ENCODE measurements at regions of chr20 and their contacts with region 1.

Region 1: DNA sequence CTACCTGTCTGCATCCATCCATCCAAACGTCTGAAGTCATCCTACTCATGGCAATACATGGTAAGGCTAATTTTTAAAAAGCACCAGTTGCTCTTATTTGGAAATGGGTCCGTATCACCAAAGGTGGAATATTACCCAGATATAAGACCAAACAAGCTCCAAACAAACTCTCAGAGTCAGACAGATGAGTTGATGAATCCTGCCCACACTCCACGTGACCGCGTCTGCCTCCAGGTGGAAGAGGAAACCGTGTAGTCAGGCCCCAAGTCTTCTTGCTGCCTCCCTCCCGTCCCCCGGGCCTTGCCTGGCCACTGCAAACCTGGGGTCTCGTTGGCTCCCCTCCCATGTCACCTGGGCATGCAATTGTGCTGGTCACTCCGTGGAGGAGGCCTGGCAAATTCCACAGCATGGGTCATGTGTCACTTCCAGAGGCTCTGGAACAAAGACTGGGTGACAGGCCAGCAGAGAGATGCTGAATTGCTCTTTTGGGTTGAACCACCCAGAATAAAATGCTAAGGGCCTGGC is 31.8 kb downstream of the CTCFL start:
- DNase-seq: no peak
- ATAC-seq: no peak

Region 2: DNA sequence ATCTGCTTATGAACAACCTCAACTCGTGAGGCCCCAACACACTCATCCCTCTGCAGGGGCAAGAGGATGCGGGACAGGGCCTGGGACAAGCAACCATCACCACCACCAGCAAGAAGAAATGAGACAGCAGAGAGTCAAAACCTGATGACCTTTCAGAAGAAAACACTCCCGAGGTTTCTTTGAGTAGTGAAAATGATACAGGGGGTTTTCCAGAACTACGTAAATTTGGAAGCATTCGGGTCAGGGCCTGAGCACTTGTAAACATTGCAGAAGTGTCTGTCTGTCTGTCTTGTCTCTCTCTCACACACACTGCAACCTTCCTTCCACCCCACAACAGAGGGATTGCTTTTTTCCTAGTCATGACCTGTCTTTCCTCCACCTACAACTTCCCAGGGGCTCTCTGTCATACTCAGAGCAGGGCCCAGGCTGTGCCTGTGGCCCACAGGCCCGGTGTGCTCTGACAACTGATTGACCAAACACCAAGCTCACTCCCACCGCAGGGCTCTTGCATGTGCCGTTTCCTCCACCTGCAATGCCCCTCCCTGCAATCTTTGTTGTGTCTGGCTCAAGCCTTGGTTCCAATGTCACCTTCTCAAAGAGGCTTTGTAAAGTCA is 317.6 kb before region 1 on chr20:
- intact Hi-C with region 1: no loop called
- DNase-seq: no peak
- ATAC-seq: no peak

Region 3: DNA sequence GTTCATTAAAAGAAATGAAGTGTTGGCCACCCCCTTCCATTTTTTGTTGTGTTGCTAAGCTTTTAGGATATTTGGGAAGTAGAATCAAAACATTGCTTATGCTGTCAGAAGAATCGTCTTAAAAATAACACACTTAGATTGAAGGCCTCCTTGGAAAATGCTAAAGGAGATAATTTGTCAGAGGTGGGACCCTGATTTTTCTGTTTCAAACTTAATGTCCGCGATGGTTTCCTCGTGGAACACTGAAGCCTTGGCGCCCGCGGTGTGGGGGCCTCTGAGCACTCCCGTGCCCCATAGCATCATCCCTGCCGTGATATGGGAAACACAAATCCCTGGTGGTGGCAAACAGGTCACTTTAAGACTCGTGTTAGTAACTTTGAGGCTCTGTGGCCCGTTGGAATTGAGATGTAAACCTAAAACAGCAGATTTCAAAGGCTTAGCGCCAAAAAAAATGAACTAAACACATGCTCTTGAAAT is 111.1 kb before region 1 on chr20:
- intact Hi-C with region 1: loop called (anchors 1 kb)
- DNase-seq: no peak
- ATAC-seq: no peak

Region 4: DNA sequence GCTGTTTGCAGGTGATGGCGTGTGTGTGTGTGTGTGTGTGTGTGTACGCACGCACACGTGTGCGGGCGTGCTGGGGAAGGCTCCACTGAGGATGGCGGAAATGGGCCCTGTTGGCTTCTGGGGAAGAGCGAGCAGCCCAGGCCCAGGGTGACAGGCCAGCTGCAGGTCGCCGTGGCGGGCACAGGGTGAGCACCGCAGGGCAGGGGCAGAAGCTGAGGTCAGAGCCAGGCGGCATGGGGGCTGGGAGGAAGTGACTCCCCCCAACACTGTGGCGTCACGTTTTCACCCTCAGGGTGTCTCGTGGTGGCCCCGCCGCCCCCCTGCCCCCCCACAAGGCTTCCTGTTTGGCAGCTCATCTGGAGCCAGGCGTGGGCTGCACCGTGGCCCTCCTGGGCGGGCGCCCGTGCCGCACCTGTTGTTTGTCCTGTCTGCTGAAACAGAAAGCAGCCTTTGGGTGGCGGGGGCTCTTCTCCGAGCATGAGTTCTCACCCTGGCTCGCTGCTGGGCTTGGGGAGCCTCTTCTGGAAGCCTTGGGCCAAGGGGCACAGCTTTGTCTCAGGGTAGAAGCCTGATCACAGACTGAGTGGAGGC is 94.8 kb before region 1 on chr20:
- intact Hi-C with region 1: loop called (anchors 5 kb)
- DNase-seq: peak; percentile 80
- ATAC-seq: no peak

Region 5: DNA sequence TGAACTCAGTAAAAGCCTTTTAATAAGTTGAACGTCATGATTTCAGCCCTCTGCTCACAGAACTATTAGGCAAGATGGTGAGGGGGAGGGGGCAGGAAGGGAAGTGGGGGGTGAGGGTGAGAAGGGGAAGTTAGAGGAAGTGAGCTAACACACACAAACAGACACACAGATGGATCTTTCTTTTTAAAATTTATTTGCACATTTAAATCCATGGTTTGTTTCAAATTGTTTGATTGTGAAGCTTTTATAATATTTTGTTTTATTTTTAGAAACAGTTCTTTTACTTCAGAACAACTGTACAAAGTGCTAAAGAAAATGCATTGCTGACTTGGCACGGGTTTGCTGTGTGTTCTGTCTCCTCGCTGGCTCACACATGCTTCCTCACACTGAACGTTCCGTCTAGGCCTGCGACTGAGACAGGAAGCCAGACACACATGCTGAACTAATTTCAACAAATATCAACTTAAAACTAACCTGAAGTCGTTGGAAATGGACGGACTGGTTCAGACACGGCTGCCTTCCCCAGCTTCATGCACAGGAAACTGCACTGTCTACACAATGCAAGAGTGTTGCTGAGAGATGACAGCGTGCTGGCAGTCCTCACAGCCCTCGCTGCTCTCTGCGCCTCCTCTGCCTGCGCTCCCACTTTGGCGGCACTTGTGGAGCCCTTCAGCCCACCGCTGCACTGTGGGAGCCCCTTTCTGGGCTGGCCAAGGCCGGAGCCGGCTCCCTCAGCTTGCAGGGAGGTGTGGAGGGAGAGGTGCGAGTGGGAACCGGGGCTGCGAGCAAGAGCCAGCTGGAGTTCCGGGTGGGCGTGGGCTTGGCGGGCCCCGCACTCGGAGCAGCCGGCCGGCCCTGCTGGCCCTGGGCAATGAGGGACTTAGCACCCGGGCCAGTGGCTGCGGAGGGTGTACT is 135.2 kb after region 1 on chr20:
- intact Hi-C with region 1: no loop called
- DNase-seq: peak; percentile 50
- ATAC-seq: peak; percentile 90